GM12878 (cell line): ENCODE measurements at regions of chr15 and their contacts with region 1.

Region 1: GRCh38 chr15:94324117-94324826 is 92.9 kb downstream of the MCTP2 start:
- DNase-seq: peak; percentile 45
- ATAC-seq: peak; percentile 96
- H3K4me3 ChIP-seq: no peak overlapping the region
- H3K27ac ChIP-seq: no peak overlapping the region
- H3K4me1 ChIP-seq: no peaks in the 10 kb centered on the region
- H3K27me3 ChIP-seq: no peaks in the 10 kb centered on the region
- CTCF ChIP-seq: peak; percentile 86 to 97 (median 89)
- EP300 ChIP-seq: no peak
- POLR2A ChIP-seq: no peak
- RAD21 ChIP-seq: peak; percentile 99

Region 2: GRCh38 chr15:94145046-94145445 is 179.2 kb before region 1 on chr15:
- CTCF ChIA-PET with region 1: no interaction called
- POLR2A ChIA-PET with region 1: no interaction called
- RAD21 ChIA-PET with region 1: interaction called, 3 read pairs
- SMC1A ChIA-PET with region 1: interaction called, 10 read pairs
- in situ Hi-C with region 1: no loop called
- intact Hi-C with region 1: no loop called
- DNase-seq: no peak
- ATAC-seq: no peak
- H3K4me3 ChIP-seq: no peak overlapping the region
- H3K27ac ChIP-seq: no peak overlapping the region
- H3K4me1 ChIP-seq: no peaks in the 10 kb centered on the region
- H3K27me3 ChIP-seq: no peaks in the 10 kb centered on the region
- CTCF ChIP-seq: no peak
- EP300 ChIP-seq: no peak
- POLR2A ChIP-seq: no peak
- RAD21 ChIP-seq: no peak

Region 3: GRCh38 chr15:94186770-94187331 is 137.4 kb before region 1 on chr15:
- CTCF ChIA-PET with region 1: interaction called, 12 read pairs
- POLR2A ChIA-PET with region 1: no interaction called
- RAD21 ChIA-PET with region 1: interaction called, 4 read pairs
- SMC1A ChIA-PET with region 1: interaction called, 5 read pairs
- in situ Hi-C with region 1: no loop called
- intact Hi-C with region 1: no loop called
- DNase-seq: no peak
- ATAC-seq: peak; percentile 57
- H3K4me3 ChIP-seq: no peak overlapping the region
- H3K27ac ChIP-seq: no peak overlapping the region
- H3K4me1 ChIP-seq: no peaks in the 10 kb centered on the region
- H3K27me3 ChIP-seq: no peaks in the 10 kb centered on the region
- CTCF ChIP-seq: no peak
- EP300 ChIP-seq: no peak
- POLR2A ChIP-seq: no peak
- RAD21 ChIP-seq: no peak

Region 4: GRCh38 chr15:94247789-94248638 is 76.3 kb before region 1 on chr15:
- CTCF ChIA-PET with region 1: interaction called, 24 read pairs
- POLR2A ChIA-PET with region 1: no interaction called
- RAD21 ChIA-PET with region 1: interaction called, 9 read pairs
- SMC1A ChIA-PET with region 1: interaction called, 12 read pairs
- in situ Hi-C with region 1: no loop called
- intact Hi-C with region 1: no loop called
- DNase-seq: no peak
- ATAC-seq: no peak
- H3K4me3 ChIP-seq: no peak overlapping the region
- H3K27ac ChIP-seq: no peak overlapping the region
- H3K4me1 ChIP-seq: no peaks in the 10 kb centered on the region
- H3K27me3 ChIP-seq: no peaks in the 10 kb centered on the region
- CTCF ChIP-seq: no peak
- EP300 ChIP-seq: no peak
- POLR2A ChIP-seq: no peak
- RAD21 ChIP-seq: no peak

Region 5: DNA sequence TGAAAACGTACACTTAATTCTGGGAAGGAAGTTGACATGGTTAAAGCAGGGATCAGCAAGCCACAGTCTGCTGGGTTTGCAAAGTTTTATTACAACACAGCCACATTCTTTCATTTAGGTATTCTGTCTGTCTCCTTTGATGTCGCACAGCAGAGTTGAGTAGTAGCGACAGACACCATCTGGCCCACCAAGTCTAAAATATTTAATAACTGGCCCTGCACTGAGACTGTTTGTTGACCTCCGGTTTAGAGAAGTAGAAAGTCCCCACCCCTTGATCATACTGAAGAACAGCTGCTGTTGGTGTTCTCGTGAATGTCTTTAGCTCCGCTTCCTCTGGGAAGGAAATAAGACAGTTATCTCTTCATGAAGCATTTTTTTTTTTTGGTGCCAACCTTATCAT is 26.7 kb before region 1 on chr15:
- CTCF ChIA-PET with region 1: interaction called, 18 read pairs
- POLR2A ChIA-PET with region 1: interaction called, 3 read pairs
- RAD21 ChIA-PET with region 1: interaction called, 4 read pairs
- SMC1A ChIA-PET with region 1: interaction called, 5 read pairs
- in situ Hi-C with region 1: no loop called
- intact Hi-C with region 1: no loop called
- DNase-seq: no peak
- ATAC-seq: peak; percentile 80
- H3K4me3 ChIP-seq: no peak overlapping the region
- H3K27ac ChIP-seq: no peak overlapping the region
- H3K4me1 ChIP-seq: no peaks in the 10 kb centered on the region
- H3K27me3 ChIP-seq: no peaks in the 10 kb centered on the region
- CTCF ChIP-seq: no peak
- EP300 ChIP-seq: no peak
- POLR2A ChIP-seq: no peak
- RAD21 ChIP-seq: no peak

Region 6: DNA sequence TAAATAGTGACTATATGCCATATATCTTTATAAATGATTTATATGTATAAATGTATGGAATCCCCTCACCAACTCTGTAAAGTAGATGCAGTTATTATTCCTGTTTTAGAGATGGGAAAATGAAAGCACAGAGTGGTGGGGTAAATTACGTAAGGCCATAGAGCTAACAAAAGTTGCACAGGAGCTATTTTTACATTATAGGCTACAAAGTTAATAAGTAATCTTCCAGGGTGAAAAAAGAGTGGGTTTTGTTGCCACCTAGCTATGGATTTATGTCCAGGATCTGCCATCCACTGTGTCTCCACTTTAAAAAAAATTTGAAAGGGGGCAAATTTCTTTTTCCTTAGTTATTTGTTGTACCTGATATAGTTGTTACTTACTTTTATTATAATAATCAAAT is 142.8 kb after region 1 on chr15:
- CTCF ChIA-PET with region 1: interaction called, 18 read pairs
- POLR2A ChIA-PET with region 1: no interaction called
- RAD21 ChIA-PET with region 1: interaction called, 14 read pairs
- SMC1A ChIA-PET with region 1: interaction called, 5 read pairs
- in situ Hi-C with region 1: no loop called
- intact Hi-C with region 1: no loop called
- DNase-seq: no peak
- ATAC-seq: no peak
- H3K4me3 ChIP-seq: no peak overlapping the region
- H3K27ac ChIP-seq: no peak overlapping the region
- H3K4me1 ChIP-seq: no peaks in the 10 kb centered on the region
- H3K27me3 ChIP-seq: no peaks in the 10 kb centered on the region
- CTCF ChIP-seq: 0 out of 6 replicates have a peak, but pooled peaks of 1 of the 3 experiments have one; percentile 0
- EP300 ChIP-seq: no peak
- POLR2A ChIP-seq: no peak
- RAD21 ChIP-seq: no peak